Activated T-helper 2 cell treated with anti-CD3 and anti-CD28 coated beads, Interferon-gamma antibody, Interleukin-2, Interleukin-4, amounts not matched to agents 10 μg/mL and 5 μg/mL and 100 μg/mL, durations not matched to agents 14 hours and 24 hours and 36 hours (primary cell): ENCODE measurements at regions of chr4 and their contacts with region 1.

Region 1: GRCh38 chr4:158821228-158821971 is 52.6 kb downstream of the FNIP2 start:
- DNase-seq: no peak
- H3K4me3 Mint-ChIP-seq: no peak overlapping the region
- H3K27ac Mint-ChIP-seq: no peak overlapping the region
- H3K4me1 Mint-ChIP-seq: peaks cover 67% of the 10 kb centered on the region
- H3K27me3 Mint-ChIP-seq: no peaks in the 10 kb centered on the region

Region 2: GRCh38 chr4:158671915-158672806 is 149.2 kb before region 1 on chr4 and contains the start of gene ETFDH:
- intact Hi-C with region 1: loop called (anchors 5 kb)
- DNase-seq: peak; percentile 98
- H3K4me3 Mint-ChIP-seq: peak within 1 kb of the TSS; percentile 98
- H3K27ac Mint-ChIP-seq: peak within 1 kb of the TSS; percentile 95
- H3K4me1 Mint-ChIP-seq: peaks cover 25% of the 10 kb centered on the region
- H3K27me3 Mint-ChIP-seq: no peaks in the 10 kb centered on the region
- total RNA-seq, gene ETFDH: 21.6 and 23.8 TPM in 2 replicates

Region 3: DNA sequence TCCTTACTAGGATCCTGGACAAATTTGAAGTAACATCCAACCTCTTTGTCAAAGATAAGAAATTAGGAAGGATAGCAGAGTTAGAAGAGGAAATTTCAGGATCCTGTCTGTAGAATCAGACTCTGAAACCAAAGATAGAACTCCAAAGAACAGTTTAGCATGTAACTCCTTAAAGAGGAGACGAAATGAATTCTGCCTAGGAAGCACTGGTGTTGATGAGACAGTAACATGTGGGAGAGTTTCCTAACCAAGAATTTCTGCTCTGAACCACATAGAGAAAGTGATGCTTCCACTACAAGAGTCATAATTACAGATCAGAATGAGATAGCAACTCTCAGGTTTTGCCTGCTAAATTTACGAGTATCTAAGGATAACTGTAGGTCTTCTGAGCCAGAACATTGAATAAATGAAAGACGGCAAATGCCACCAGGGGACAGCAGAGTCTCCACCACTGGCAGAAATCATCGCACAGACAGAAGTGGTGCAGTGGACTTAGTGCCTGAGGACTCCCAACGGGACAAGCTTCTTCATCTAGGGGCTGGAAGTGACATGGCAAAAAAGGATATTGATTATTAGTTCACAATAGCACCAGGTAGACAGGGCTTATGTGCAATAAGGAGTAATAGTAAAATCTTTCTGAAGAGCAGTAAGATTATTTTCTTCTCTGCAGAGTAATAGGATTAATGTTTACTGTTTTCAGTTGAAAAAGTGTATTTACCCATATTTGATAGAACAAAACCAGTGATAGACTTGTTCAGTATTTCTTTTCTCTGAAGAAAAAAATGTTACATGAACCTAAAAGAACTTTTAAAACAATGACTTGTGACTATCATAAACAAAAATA is 91.5 kb before region 1 on chr4:
- intact Hi-C with region 1: loop called (anchors 2 kb)
- DNase-seq: peak; percentile 28
- H3K4me3 Mint-ChIP-seq: no peak overlapping the region
- H3K27ac Mint-ChIP-seq: no peak overlapping the region
- H3K4me1 Mint-ChIP-seq: peaks cover 30% of the 10 kb centered on the region
- H3K27me3 Mint-ChIP-seq: peaks cover 30% of the 10 kb centered on the region

Region 4: GRCh38 chr4:158809611-158810486 is 11.6 kb before region 1 on chr4:
- intact Hi-C with region 1: loop called (anchors 1 kb)
- DNase-seq: no peak
- H3K4me3 Mint-ChIP-seq: peak overlapping the region; percentile 74
- H3K27ac Mint-ChIP-seq: peak overlapping the region; percentile 88
- H3K4me1 Mint-ChIP-seq: peaks cover 45% of the 10 kb centered on the region
- H3K27me3 Mint-ChIP-seq: no peaks in the 10 kb centered on the region

Region 5: GRCh38 chr4:158884280-158884679 is 62.9 kb after region 1 on chr4:
- intact Hi-C with region 1: no loop called
- DNase-seq: no peak
- H3K4me3 Mint-ChIP-seq: no peak overlapping the region
- H3K27ac Mint-ChIP-seq: no peak overlapping the region
- H3K4me1 Mint-ChIP-seq: no peaks in the 10 kb centered on the region
- H3K27me3 Mint-ChIP-seq: no peaks in the 10 kb centered on the region

Region 6: DNA sequence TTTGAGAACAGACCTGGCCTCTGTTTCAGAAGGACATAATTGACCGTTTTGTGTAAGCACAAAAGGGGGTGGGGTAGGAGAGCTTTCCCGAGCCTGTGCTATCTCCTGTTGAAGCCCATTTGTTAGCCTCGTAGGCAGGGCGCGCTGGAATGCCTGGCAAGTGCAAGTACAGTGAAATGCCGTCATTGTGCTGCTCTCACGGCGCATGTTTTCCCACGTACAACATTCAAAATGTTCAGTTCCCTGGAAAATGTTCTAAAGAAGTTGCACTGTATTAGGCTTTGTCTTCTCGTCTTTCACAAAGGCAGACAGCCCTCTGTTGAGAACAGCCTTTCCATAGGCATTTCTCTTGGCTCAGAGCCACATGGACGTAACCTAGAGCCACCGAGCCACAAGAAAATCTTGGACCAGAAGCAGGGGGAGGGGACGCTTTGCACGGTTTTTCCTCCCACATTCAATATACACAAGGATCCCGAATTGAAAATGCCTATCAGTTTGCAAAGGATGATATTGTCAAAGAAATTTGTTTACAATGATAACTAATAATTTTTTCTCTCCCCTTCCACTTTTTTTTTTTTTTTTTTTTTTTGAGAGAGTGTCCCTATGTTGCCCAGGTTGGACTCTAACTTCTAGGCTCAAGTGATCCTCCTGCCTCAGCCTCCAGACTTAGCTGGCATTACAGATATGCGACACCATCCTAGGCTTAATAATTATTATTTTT is 226.9 kb after region 1 on chr4:
- intact Hi-C with region 1: no loop called
- DNase-seq: no peak
- H3K4me3 Mint-ChIP-seq: no peak overlapping the region
- H3K27ac Mint-ChIP-seq: no peak overlapping the region
- H3K4me1 Mint-ChIP-seq: peaks cover 34% of the 10 kb centered on the region
- H3K27me3 Mint-ChIP-seq: peaks cover 36% of the 10 kb centered on the region

Region 7: GRCh38 chr4:159719531-159719930 is 898.1 kb after region 1 on chr4:
- intact Hi-C with region 1: no loop called
- DNase-seq: no peak
- H3K4me3 Mint-ChIP-seq: no peak overlapping the region
- H3K27ac Mint-ChIP-seq: no peak overlapping the region
- H3K4me1 Mint-ChIP-seq: no peaks in the 10 kb centered on the region
- H3K27me3 Mint-ChIP-seq: no peaks in the 10 kb centered on the region